Ascending aorta (tissue), 2 donors: ENCODE measurements at regions of chr17 and their contacts with region 1.

Region 1: DNA sequence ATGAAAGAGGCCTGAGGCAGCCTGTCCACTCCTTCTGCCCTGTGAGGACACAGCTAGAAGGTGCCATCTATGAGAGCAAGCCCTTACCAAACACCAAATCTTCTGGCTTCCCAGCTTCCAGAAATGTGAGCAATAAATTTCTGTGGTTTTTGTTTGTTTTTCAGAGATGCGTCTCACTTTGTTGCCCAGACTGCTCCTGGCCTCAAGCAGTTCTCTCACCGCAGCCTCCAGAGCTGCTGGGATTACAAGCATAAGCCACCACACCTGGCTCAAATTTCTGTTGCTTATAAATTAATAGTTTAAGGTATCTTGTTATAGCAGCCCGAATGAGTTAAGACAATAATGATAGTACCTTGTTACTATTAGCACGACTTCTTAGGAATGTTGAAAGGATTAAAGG is 12.5 kb upstream of the SLC16A11 start:
- DNase-seq: no peak
- H3K4me3 ChIP-seq: no peak overlapping the region
- H3K27ac ChIP-seq: no peak overlapping the region
- H3K4me1 ChIP-seq: no peaks in the 10 kb centered on the region
- H3K27me3 ChIP-seq: no peaks in the 10 kb centered on the region
- CTCF ChIP-seq: no peak

Region 2: GRCh38 chr17:7136266-7136877 is 80.0 kb after region 1 on chr17:
- intact Hi-C with region 1: loop called (anchors 2 kb)
- DNase-seq: peak in 1 of 2 donors; percentile 80
- H3K4me3 ChIP-seq: no peak overlapping the region
- H3K27ac ChIP-seq: no peak overlapping the region
- H3K4me1 ChIP-seq: no peaks in the 10 kb centered on the region
- H3K27me3 ChIP-seq: no peaks in the 10 kb centered on the region
- CTCF ChIP-seq: peak; percentile 75 to 88 (median 78)